AG04449 (cell line): ENCODE measurements at regions of chr4 and their contacts with region 1.

Region 1: GRCh38 chr4:139501927-139502899 is 48.3 kb downstream of the RAB33B start:
- DNase-seq: no peak
- H3K4me3 ChIP-seq: no peak overlapping the region
- CTCF ChIP-seq: no peak

Region 2: DNA sequence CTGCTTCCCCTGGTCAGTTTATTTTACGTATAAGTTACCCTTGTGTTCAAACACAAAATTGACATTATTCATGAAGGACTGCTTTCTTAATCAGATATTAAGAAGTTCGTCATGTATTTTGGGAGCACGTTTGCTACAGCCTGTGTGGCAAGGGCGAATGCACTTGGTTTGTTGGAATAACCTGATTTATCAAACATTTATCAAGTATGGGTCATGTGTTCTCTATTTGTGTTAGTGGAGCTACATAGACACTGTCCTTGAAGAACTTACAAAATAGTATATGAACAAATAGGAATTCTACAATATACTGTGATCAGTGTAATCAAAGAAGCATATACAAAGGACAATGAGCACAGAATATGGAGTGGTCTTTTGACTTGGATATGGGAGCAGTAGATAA is 25.9 kb before region 1 on chr4:
- CTCF ChIA-PET with region 1: interaction called, 39 read pairs
- POLR2A ChIA-PET with region 1: no interaction called
- DNase-seq: no peak
- H3K4me3 ChIP-seq: no peak overlapping the region
- CTCF ChIP-seq: no peak

Region 3: DNA sequence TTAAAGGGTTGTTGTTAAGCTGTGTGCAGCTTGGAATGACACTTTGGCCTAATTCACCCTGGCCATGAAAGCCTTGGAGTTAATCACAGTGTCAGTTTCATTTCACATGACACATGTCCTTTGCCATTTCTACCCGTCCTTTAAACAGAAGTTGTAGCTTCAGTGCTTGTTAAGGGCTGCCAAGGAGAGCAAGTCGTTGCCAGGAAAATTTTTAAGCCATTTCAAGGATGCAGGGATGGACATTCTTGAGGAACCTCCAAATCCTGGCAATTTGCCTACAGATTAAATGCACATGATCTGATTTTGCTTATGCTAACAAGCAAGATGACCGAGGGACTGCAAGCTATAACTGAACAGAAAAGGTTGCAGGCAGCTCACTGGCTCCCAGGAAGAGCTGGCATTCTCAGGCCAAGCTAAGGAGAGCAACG is 13.3 kb after region 1 on chr4:
- CTCF ChIA-PET with region 1: interaction called, 33 read pairs
- POLR2A ChIA-PET with region 1: no interaction called
- DNase-seq: no peak
- H3K4me3 ChIP-seq: no peak overlapping the region
- CTCF ChIP-seq: no peak

Region 4: DNA sequence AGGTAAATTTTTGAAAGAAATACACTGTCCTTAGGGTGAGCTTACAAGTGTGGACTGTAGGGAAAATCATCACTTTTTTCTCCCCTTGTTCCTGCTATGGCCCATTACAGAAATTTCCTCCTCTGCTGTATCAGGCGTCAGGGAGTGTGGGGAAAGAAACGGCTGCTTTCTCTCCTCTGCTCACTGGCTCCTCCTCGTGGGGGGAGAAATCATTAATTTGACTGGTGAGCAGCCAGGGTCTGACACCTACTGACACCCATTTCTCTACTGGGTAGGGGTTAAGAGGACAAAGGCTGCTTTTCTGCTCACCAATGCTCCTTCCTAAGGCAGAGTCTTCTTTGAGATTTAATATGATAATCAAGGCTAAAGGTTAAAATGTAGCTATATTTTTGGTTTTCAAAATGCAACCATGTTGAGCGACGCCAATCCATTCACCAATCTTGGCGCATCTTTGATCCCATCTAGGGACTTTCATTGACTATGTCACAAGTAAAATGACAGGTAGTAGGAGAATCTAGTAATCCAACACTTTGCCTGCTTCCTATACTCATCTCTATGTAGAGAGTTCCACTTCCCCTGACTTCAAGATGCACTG is 28.7 kb after region 1 on chr4:
- CTCF ChIA-PET with region 1: interaction called, 20 read pairs
- POLR2A ChIA-PET with region 1: no interaction called
- DNase-seq: no peak
- H3K4me3 ChIP-seq: no peak overlapping the region
- CTCF ChIP-seq: peak; percentile 54

Region 5: GRCh38 chr4:139562067-139562867 is 60.1 kb after region 1 on chr4:
- CTCF ChIA-PET with region 1: no interaction called
- POLR2A ChIA-PET with region 1: no interaction called
- DNase-seq: no peak
- H3K4me3 ChIP-seq: no peak overlapping the region
- CTCF ChIP-seq: no peak

Region 6: GRCh38 chr4:139651282-139652194 is 149.3 kb after region 1 on chr4:
- CTCF ChIA-PET with region 1: interaction called, 37 read pairs
- POLR2A ChIA-PET with region 1: no interaction called
- DNase-seq: no peak
- H3K4me3 ChIP-seq: no peak overlapping the region
- CTCF ChIP-seq: peak; percentile 90

Region 7: GRCh38 chr4:140130677-140131076 is 628.5 kb after region 1 on chr4:
- CTCF ChIA-PET with region 1: no interaction called
- POLR2A ChIA-PET with region 1: no interaction called
- DNase-seq: no peak
- H3K4me3 ChIP-seq: no peak overlapping the region
- CTCF ChIP-seq: no peak